Astrocyte of the cerebellum (primary cell): ENCODE measurements at regions of chr20 and their contacts with region 1.

Region 1: DNA sequence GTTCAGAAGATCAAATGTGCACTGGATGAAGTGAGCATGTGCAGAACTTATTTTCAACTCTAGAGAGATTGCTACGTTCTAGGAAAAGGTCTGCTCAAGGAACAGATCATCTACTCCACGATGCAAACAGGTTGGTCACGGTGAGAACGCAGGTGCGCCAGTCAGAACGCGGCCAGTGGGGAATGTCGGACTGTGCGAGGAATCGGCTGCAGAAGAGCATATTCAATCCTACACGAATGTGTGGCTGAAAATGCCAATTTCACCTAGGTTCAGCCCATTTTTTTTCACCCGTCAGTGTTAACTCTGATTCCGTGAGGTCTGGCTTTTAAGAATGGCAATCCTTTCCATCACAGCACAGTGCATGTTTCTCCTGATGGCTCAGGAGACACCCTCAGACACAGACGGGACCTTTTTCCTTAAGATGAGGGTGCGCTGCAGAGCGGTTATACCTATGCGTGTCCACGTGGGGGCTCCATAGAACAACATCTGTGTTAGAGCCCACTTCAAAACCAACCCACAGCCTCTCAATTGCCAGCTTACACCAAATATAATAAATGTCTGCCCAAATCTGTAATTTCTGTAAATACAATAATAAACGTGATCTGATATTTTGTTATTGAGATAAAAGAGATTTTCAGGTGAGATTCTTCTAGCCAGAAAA is 250.4 kb downstream of the FOXA2 start:
- DNase-seq: peak; percentile 38
- H3K4me3 ChIP-seq: no peak overlapping the region
- CTCF ChIP-seq: peak; percentile 83

Region 2: DNA sequence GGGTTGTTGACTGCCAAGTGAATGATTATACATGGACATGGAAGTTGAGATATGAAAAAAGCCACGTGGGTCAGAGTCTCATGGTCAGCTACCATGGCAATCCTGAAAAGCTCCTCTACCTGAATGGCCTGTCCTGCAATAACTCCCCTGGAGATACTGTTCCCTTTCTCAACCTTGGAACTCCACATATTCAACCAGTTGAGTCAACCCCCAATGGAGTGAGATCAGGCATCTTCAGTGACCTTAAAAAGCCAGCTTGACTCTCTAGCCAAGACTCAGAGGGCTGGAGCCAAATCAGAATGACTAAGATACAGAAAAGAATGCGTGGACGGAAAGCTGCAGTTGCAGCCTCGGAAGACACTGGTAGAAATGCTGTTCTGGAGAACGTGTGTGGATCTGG is 90.9 kb before region 1 on chr20:
- in situ Hi-C with region 1: no loop called
- DNase-seq: no peak
- H3K4me3 ChIP-seq: no peak overlapping the region
- CTCF ChIP-seq: no peak

Region 3: GRCh38 chr20:23048283-23049200 is 714.5 kb after region 1 on chr20:
- in situ Hi-C with region 1: loop called (anchors 25 kb)
- DNase-seq: no peak
- H3K4me3 ChIP-seq: peak overlapping the region; percentile 45
- CTCF ChIP-seq: peak; percentile 37